ENCODE measurements at regions of chr16 and their contacts with region 1.

Region 1: DNA sequence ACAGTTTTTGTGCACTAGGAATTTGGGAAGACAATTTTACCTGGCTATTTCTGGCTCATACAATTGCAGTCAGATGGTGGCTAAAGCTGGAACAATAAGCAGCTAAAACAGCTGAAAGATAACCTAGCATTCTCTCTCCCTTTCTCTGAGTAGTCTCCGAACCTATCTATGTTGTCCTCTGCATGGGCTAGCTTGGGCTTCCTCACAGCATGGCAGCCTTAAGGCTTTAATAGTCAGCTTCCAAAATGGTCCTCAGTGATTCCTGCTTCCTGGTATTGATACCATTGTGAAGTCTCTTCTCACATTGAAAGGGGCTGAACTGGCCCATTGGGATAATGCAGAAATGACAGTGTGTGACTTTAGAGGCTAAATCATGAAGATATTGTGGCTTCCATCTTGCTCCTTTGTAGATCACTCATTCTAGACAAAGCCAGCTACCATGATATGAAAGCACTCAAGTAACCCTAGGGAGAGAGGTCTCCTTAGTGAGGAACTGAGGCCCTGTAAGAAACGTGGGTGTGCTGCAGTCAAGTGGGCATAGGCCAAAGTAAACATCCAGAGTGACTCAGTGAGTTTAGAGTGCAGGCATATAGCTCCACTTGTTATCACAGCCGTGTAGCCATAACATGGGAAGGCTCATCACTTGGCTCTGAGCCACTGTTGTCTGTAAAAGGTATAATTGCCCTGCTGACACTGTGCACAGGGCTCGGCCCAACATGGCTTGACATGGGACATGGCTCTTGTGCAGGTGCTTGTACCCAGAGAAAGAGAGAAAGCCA is 5.5 kb upstream of the VKORC1 start:
- DNase-seq: no peak
- ATAC-seq: no peak
- H3K4me3 ChIP-seq: no peak overlapping the region
- H3K27ac ChIP-seq: no peak overlapping the region
- H3K4me1 ChIP-seq: peaks cover 9% of the 10 kb centered on the region
- H3K27me3 ChIP-seq: no peaks in the 10 kb centered on the region
- CTCF ChIP-seq: no peak
- POLR2A ChIP-seq: no peak

Region 2: GRCh38 chr16:31032736-31033708 is 67.0 kb before region 1 on chr16 and contains the start of gene STX4:
- intact Hi-C with region 1: no loop called
- DNase-seq: peak; percentile 98
- ATAC-seq: peak; percentile 92
- H3K4me3 ChIP-seq: peak within 1 kb of the TSS; percentile 54 to 84
- H3K27ac ChIP-seq: peak within 1 kb of the TSS; percentile 76 to 94 (median 90)
- H3K4me1 ChIP-seq: peaks cover 15% of the 10 kb centered on the region
- H3K27me3 ChIP-seq: no peaks in the 10 kb centered on the region
- CTCF ChIP-seq: peak in 2 of 7 experiments; percentile 16 to 26
- POLR2A ChIP-seq: peak in 2 of 3 donors; percentile 51 to 54
- total RNA-seq, gene STX4: 25.9 to 38.6 TPM

Region 3: DNA sequence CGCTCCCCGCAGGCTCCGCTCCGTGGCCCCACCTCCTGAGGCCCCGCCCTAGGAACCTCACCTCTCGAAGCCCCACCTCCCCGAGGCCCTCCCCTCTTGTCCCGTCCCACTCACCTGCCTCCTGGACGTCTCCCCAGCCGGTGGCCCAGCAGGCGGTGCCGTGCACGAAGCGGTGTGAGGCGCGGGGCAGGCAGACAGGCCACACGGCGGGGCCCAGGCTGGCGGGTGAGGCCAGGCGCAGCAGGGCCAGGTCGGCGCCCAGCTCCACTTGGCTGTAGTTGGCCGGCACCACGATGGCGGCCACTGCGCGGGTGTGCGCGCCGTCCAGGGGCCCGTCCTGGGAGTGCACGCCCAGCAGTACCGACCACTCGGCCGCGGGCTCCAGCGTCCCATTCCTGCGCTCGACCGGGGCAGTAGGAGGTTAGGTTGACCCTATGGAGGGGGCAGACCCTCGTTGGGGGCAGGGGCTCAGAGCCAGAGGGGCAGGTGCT is 48.3 kb after region 1 on chr16:
- intact Hi-C with region 1: loop called (anchors 5 kb)
- DNase-seq: peak; percentile 81 to 91 (median 88)
- ATAC-seq: peak; percentile 94
- H3K4me3 ChIP-seq: no peak overlapping the region
- H3K27ac ChIP-seq: no peak overlapping the region
- H3K4me1 ChIP-seq: peaks cover 11% of the 10 kb centered on the region
- H3K27me3 ChIP-seq: no peaks in the 10 kb centered on the region
- CTCF ChIP-seq: peak in 3 of 7 experiments; percentile 14 to 43 (median 28)
- POLR2A ChIP-seq: peak in 2 of 3 donors; percentile 29 to 34

Region 4: DNA sequence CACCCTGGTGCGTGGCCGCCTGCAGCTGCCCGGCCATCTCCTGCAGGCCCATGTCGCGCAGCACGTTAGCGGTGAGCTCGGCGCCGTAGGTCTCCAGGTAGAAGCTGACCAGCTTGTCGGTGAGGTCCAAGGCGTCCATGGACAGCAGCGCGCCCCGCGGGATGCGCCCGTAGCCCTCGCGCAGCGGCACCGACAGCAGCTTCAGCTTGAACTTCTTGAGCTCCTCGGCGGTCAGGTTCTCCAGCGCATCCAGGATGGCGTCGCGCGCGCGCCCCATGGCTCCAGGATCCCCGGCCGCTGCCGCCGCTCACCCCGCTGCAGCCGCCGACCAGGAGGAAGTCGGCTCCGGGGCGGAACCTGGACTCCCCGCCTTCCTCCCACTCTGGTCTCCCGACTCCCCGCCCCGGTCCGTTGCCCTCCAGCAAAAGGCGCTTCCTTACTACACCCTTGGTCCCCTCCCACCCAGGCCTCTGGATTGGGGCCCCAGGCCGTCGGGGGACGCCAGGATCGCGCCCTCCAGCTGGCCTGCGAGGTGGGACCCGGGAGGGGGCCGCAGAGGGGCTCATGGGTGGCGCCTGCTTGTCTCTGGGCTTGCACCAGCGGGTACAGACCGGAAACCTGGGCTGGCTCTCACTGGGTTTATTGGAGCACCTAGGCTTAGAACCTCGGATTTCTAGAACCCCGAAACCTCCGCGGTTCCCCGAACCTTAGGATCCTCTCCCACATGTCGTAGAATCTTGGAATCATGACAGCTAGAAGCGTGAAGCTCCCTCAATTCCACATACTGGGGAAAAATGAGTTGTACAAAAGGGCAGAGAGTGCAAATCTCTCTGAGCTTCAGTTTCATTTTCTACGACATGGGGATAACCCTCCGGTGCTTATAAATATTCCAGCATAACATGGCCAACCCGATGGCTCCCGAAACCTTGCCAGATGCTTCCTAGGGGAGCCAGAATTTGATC is 102.6 kb after region 1 on chr16 and contains the start of gene PYCARD:
- intact Hi-C with region 1: no loop called
- DNase-seq: peak; percentile 34 to 48 (median 41)
- ATAC-seq: peak; percentile 48
- H3K4me3 ChIP-seq: peak within 1 kb of the TSS; percentile 28 to 46
- H3K27ac ChIP-seq: peak within 1 kb of the TSS in 3 of 4 donors; percentile 15 to 70 (median 47)
- H3K4me1 ChIP-seq: peaks cover 24% of the 10 kb centered on the region
- H3K27me3 ChIP-seq: no peaks in the 10 kb centered on the region
- CTCF ChIP-seq: no peak
- POLR2A ChIP-seq: peak in 2 of 3 donors; percentile 18 to 46
- total RNA-seq, gene PYCARD: 12.7 to 13.8 TPM

Measured in body of pancreas (tissue), 4 donors.